ENCODE measurements at regions of chr9 and their contacts with region 1.

Region 1: DNA sequence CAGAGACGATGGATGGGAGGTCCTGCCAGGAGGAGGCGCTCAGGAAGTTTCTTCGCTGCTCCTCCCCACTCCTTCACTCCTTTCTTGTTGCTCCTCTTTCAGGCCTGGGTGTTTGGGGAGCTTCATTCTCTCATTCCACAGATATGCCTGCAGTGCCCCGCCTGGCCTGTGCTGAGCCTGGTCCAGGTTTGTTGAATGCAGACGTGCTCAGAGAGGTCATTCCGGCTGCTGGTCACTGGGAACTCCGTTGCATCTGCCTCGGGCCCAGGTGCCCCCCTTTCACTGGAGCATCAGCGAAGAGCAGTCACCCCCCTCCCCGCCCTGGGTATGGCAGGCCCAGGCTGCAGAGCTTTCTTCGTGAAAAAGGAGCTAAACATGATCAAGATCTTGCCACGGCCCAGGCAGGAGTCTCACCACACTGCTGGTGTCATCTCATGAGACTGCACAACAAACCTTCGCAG is 15.5 kb downstream of the SURF6 start:
- DNase-seq: no peak
- H3K4me3 ChIP-seq: no peak overlapping the region
- H3K27ac ChIP-seq: no peak overlapping the region
- H3K4me1 ChIP-seq: no peaks in the 10 kb centered on the region
- H3K27me3 ChIP-seq: no peaks in the 10 kb centered on the region
- CTCF ChIP-seq: peak; percentile 18 to 52 (median 38)
- EP300 ChIP-seq: no peak
- POLR2A ChIP-seq: no peak
- RAD21 ChIP-seq: peak; percentile 20 to 29; a peak in 3 of 4 replicates

Region 2: GRCh38 chr9:133306242-133307204 is 13.9 kb before region 1 on chr9:
- CTCF ChIA-PET with region 1: interaction called, 15 read pairs
- POLR2A ChIA-PET with region 1: no interaction called
- DNase-seq: no peak
- H3K4me3 ChIP-seq: no peak overlapping the region
- H3K27ac ChIP-seq: no peak overlapping the region
- H3K4me1 ChIP-seq: no peaks in the 10 kb centered on the region
- H3K27me3 ChIP-seq: no peaks in the 10 kb centered on the region; a peak in 1 of 7 replicates
- CTCF ChIP-seq: no peak
- EP300 ChIP-seq: no peak
- POLR2A ChIP-seq: no peak
- RAD21 ChIP-seq: no peak

Measured in H1 (cell line).